ENCODE measurements at regions of chr6 and their contacts with region 1.

Region 1: GRCh38 chr6:151014404-151015100 is 149.1 kb downstream of the MTHFD1L start:
- DNase-seq: no peak
- H3K4me3 ChIP-seq: no peak overlapping the region; the same call in 1 of the 2 replicates
- H3K27ac ChIP-seq: peak overlapping the region; percentile 47
- H3K27me3 ChIP-seq: no peaks in the 10 kb centered on the region
- CTCF ChIP-seq: peak; percentile 98

Region 2: GRCh38 chr6:150891888-150892485 is 122.6 kb before region 1 on chr6:
- CTCF ChIA-PET with region 1: interaction called, 14 read pairs
- POLR2A ChIA-PET with region 1: no interaction called
- DNase-seq: peak; percentile 72
- H3K4me3 ChIP-seq: no peak overlapping the region
- H3K27ac ChIP-seq: no peak overlapping the region
- H3K27me3 ChIP-seq: no peaks in the 10 kb centered on the region
- CTCF ChIP-seq: peak; percentile 89

Region 3: DNA sequence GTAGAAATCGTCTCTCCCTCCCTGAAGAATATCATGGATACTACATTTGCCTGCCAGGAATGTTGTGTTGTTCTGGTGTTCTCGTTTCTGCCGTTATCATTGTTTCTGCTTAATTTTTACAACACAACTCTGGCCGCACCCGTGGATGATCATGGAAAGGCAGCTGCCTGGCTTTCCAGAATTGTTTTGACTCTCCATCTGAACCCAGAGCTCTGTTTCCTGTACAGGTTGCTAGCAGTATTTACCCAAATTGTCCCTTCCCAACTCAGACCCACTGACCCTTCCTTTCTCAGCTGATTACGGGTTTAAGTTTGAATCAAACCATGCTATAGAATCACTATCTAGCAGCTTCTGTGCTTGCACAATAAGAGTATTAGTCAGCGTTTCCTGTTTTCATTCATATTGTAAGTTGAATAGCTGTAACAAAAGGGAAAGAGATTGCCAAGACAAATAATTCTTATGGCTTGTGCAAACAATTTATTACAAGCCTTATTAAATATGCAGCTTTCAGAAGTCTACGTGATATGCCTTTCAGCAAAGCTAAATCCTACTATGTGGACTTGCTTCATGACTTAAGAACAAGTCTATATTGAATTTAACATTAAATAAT is 10.0 kb before region 1 on chr6:
- CTCF ChIA-PET with region 1: interaction called, 37 read pairs
- POLR2A ChIA-PET with region 1: interaction called, 6 read pairs
- DNase-seq: peak; percentile 66
- H3K4me3 ChIP-seq: no peak overlapping the region
- H3K27ac ChIP-seq: peak overlapping the region; percentile 69
- H3K27me3 ChIP-seq: no peaks in the 10 kb centered on the region
- CTCF ChIP-seq: no peak

Region 4: GRCh38 chr6:151067684-151068596 is 53.4 kb after region 1 on chr6:
- CTCF ChIA-PET with region 1: interaction called, 22 read pairs
- POLR2A ChIA-PET with region 1: no interaction called
- DNase-seq: peak; percentile 83
- H3K4me3 ChIP-seq: no peak overlapping the region; the same call in 1 of the 2 replicates
- H3K27ac ChIP-seq: peak overlapping the region; percentile 94
- H3K27me3 ChIP-seq: no peaks in the 10 kb centered on the region
- CTCF ChIP-seq: no peak

Region 5: DNA sequence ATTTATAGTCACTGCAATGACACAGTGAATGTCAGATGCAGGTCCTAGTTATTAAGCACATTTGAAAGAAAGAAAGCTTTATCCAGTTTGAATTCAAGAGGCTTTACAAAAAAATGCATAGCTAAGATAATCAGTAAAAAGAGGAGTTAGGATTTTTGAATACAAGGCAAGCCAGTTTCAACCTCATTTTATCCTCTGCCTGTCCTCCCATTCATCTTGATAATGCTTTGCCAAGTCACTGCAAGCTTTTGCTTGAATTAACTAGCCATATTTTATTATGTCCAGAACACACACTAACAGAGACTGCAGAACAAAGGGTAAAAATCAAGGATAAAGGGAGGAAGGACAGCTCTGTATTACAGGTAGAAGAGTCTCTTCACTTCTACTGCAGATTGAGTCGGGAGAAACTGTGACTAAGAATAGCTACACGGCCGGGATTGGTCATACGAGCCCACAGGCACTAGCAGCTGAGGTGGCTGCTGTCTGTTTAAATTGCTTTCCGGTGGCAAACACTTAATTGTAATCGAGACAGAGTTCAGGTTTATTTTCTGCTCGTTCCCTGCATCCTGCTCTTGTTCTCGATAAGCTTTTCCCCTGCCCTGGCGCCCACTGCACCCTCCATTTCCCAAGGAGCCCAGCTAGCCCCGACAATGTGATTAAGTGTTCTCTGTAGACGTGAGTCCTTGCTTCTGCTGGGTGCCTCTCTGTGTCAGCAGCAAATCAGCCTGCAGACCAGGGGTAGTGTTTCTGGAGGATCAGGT is 194.7 kb after region 1 on chr6:
- CTCF ChIA-PET with region 1: interaction called, 10 read pairs
- POLR2A ChIA-PET with region 1: no interaction called
- DNase-seq: no peak
- H3K4me3 ChIP-seq: no peak overlapping the region
- H3K27ac ChIP-seq: no peak overlapping the region
- H3K27me3 ChIP-seq: peaks cover 2% of the 10 kb centered on the region
- CTCF ChIP-seq: no peak

Region 6: DNA sequence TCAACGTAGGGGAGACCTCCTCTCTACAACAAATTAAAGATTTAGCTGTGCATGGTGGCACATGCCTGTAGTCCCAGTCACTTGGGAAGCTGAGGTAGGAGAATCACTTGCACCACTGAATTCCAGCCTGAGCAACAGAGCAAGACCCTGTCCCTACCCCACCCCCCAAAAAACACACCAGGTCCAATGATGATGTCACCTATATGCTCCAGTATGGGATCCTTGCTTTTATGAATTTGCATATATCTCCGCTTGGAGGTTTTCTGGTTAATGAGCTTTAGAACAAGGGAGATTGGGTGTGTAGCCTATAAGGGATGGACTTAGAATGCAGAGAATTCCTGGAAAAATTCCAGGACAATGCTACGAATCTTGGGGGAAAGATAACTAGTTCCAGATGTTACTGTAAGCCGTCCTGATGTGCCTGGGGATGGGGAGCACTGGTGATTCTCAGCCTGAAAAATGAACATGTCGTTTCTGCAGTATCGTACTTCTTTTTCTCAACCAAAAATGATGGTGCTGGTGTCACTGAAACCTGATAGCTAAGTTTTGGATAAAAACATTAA is 315.7 kb after region 1 on chr6:
- CTCF ChIA-PET with region 1: interaction called, 131 read pairs
- POLR2A ChIA-PET with region 1: interaction called, 3 read pairs
- DNase-seq: peak; percentile 77
- H3K4me3 ChIP-seq: no peak overlapping the region
- H3K27ac ChIP-seq: no peak overlapping the region
- H3K27me3 ChIP-seq: no peaks in the 10 kb centered on the region
- CTCF ChIP-seq: no peak

Measured in AG04450 (cell line).